SK-N-SH (cell line): ENCODE measurements at regions of chr7 and their contacts with region 1.

Region 1: GRCh38 chr7:142516038-142516501 is 233.2 kb upstream of the PRSS1 start:
- DNase-seq: peak; percentile 69
- H3K4me3 ChIP-seq: peak overlapping the region in 1 of 2 experiments; percentile 20; a peak in 1 of 4 replicates
- H3K27ac ChIP-seq: no peak overlapping the region; a peak in 1 of 4 replicates
- H3K4me1 ChIP-seq: peaks cover 0 to 18% of the 10 kb centered on the region in 2 experiments; a peak in 2 of 4 replicates
- H3K27me3 ChIP-seq: peaks cover 33% of the 10 kb centered on the region
- CTCF ChIP-seq: peak; percentile 96
- EP300 ChIP-seq: no peak
- RAD21 ChIP-seq: peak; percentile 85

Region 2: DNA sequence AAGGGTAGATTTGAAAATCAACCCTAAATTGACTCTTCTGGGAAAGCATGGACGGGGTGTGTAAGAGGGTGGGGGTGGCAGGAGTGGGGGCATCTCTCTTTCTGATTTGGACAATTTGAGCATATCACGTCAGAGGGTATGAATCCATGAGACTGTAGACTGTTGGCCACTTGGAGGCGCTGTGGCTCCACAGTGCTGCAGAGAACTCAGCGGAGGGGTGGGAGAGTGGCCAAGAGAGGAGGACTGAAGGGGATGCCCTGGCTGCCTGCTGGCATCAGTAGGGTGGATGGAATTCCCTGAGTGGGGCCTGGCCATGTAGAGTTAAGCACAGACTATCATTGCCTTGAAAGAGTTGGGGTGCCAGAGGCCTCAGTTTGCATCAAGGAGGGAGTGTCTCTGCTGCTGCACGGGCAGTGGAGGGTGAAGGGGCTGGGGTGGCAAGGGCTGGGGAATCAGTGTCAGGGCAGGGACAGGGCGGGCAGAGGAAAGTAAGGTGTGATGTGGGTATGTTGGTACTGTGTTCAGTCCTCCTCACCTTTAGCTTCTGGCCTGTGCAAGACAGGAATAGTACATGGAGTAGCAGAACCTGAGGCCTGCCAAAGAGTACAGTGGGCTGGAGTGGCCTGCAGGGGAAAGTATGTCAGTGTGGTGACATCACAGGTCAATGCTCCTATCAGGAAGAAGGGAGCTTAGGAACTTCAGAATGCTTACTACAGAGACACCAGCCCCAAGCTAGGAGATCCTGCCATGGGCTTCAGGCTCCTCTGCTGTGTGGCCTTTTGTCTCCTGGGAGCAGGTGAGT is 124.7 kb before region 1 on chr7:
- CTCF ChIA-PET with region 1: no interaction called
- POLR2A ChIA-PET with region 1: no interaction called
- DNase-seq: no peak
- H3K4me3 ChIP-seq: no peak overlapping the region
- H3K27ac ChIP-seq: no peak overlapping the region
- H3K4me1 ChIP-seq: peaks cover 0 to 15% of the 10 kb centered on the region in 2 experiments; a peak in 1 of 4 replicates
- H3K27me3 ChIP-seq: no peaks in the 10 kb centered on the region; the same call in 1 of the 2 replicates
- CTCF ChIP-seq: peak; percentile 55
- EP300 ChIP-seq: no peak
- RAD21 ChIP-seq: peak; percentile 34

Region 3: DNA sequence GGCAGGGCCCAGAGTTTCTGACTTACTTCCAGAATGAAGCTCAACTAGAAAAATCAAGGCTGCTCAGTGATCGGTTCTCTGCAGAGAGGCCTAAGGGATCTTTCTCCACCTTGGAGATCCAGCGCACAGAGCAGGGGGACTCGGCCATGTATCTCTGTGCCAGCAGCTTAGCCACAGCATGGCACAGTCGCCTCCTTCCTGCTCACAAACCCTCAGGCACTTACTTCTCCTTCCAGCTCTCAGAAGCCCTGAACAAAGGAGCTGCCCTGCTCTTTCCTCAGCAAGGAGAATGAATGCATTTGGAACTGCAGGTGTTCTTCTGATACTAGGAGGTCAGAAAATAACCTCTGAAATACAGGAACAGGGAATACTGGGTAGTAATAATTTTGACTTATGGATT is 13.5 kb after region 1 on chr7:
- CTCF ChIA-PET with region 1: interaction called, 167 read pairs
- POLR2A ChIA-PET with region 1: interaction called, 4 read pairs
- DNase-seq: no peak
- H3K4me3 ChIP-seq: no peak overlapping the region
- H3K27ac ChIP-seq: no peak overlapping the region
- H3K4me1 ChIP-seq: peaks cover 0 to 11% of the 10 kb centered on the region in 2 experiments; a peak in 2 of 4 replicates
- H3K27me3 ChIP-seq: peaks cover 43% of the 10 kb centered on the region; the same call in 1 of the 2 replicates
- CTCF ChIP-seq: no peak
- EP300 ChIP-seq: no peak
- RAD21 ChIP-seq: no peak

Region 4: DNA sequence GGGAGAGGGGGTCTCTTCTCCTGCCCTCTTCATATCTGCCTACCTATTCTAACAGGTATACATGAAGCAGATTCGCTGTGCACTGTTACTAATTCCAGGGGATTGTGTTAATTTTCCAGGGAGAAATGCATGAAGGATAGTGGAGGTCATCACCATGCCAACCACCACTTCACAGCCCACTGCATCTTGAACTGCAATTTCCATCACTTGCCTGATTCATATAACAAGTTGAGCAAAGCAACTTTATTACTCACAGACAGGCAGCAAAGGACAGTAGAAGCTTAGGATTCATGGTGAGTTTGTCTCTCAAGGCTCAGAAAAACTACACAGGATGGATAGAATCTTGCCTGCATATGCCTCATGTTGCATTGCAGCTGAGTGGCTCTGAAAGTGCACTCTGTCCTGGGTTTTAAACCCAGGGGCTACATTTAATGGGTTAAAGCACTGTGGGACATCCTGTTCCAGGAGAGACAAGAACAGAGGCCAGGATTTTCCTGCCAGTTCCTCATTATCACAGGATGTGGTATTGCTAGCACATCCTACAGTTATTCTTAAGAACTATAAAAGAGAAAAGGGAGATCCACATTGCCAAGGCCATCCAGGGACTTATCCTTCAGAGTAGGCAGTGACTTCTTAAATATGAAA is 96.3 kb after region 1 on chr7:
- CTCF ChIA-PET with region 1: interaction called, 10 read pairs
- POLR2A ChIA-PET with region 1: no interaction called
- DNase-seq: peak; percentile 63
- H3K4me3 ChIP-seq: no peak overlapping the region
- H3K27ac ChIP-seq: peak overlapping the region in 1 of 2 experiments; percentile 98; a peak in 3 of 4 replicates
- H3K4me1 ChIP-seq: peaks cover 0 to 17% of the 10 kb centered on the region in 2 experiments; a peak in 2 of 4 replicates
- H3K27me3 ChIP-seq: no peaks in the 10 kb centered on the region; the same call in 1 of the 2 replicates
- CTCF ChIP-seq: no peak
- EP300 ChIP-seq: peak; percentile 23 to 68; a peak in 2 of 4 replicates
- RAD21 ChIP-seq: no peak